Caco-2 (cell line): ENCODE measurements at regions of chrX and their contacts with region 1.

Region 1: GRCh38 chrX:2552620-2553201 is 51.9 kb upstream of the DHRSX start:
- DNase-seq: peak; percentile 71 to 72
- H3K4me3 ChIP-seq: no peak overlapping the region
- H3K4me3 Mint-ChIP-seq: peak overlapping the region; percentile 40
- H3K27ac Mint-ChIP-seq: peak overlapping the region; percentile 65
- H3K4me1 ChIP-seq: peaks cover 24% of the 10 kb centered on the region
- H3K4me1 Mint-ChIP-seq: peaks cover 14% of the 10 kb centered on the region
- H3K27me3 ChIP-seq: no peaks in the 10 kb centered on the region
- H3K27me3 Mint-ChIP-seq: no peaks in the 10 kb centered on the region
- CTCF ChIP-seq: no peak

Region 2: GRCh38 chrX:2589186-2590030 is 36.7 kb after region 1 on chrX:
- CTCF ChIA-PET with region 1: no interaction called
- POLR2A ChIA-PET with region 1: no interaction called
- intact Hi-C with region 1: loop called (anchors 5 kb)
- DNase-seq: no peak
- H3K4me3 ChIP-seq: no peak overlapping the region
- H3K4me3 Mint-ChIP-seq: no peak overlapping the region
- H3K27ac Mint-ChIP-seq: no peak overlapping the region
- H3K4me1 ChIP-seq: peaks cover 17% of the 10 kb centered on the region
- H3K4me1 Mint-ChIP-seq: peaks cover 11% of the 10 kb centered on the region
- H3K27me3 ChIP-seq: no peaks in the 10 kb centered on the region
- H3K27me3 Mint-ChIP-seq: no peaks in the 10 kb centered on the region
- CTCF ChIP-seq: no peak